HCT116 (cell line): ENCODE measurements at regions of chr22 and their contacts with region 1.

Region 1: GRCh38 chr22:26330966-26331625 is 98.0 kb upstream of the ASPHD2 start:
- DNase-seq: peak; percentile 63
- ATAC-seq: peak; percentile 96
- H3K4me3 ChIP-seq: no peak overlapping the region
- H3K27ac ChIP-seq: no peak overlapping the region
- H3K4me1 ChIP-seq: no peaks in the 10 kb centered on the region
- H3K27me3 ChIP-seq: peaks cover 38% of the 10 kb centered on the region
- CTCF ChIP-seq: peak; percentile 48 to 95 (median 91); a peak in 5 of 6 replicates
- POLR2A ChIP-seq: no peak
- RAD21 ChIP-seq: peak; percentile 80

Region 2: DNA sequence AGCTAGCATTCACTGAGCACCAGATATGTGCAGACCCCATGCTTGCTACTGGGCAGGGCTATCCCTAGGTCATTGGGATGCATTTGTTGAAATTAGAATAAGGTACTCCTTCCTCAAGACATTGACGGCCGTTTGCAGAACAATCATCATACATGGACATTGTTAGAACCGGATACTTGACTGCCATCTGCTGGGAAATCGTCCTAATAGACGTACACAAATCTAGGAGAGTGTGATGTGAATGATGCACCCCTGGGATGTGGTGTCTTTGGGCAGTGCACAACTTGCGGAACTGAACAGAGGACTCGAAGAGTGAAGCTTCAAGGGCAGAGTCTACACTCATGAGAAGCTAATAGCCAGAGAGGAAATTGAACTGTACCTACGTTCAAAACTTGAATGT is 553.2 kb before region 1 on chr22:
- CTCF ChIA-PET with region 1: interaction called, 14 read pairs
- POLR2A ChIA-PET with region 1: no interaction called
- RAD21 ChIA-PET with region 1: interaction called in 1 of 2 experiments, 3 read pairs
- intact Hi-C with region 1: loop called (anchors 1 kb)
- DNase-seq: peak; percentile 44
- ATAC-seq: peak; percentile 88
- H3K4me3 ChIP-seq: no peak overlapping the region
- H3K27ac ChIP-seq: no peak overlapping the region
- H3K4me1 ChIP-seq: no peaks in the 10 kb centered on the region
- H3K27me3 ChIP-seq: no peaks in the 10 kb centered on the region
- CTCF ChIP-seq: peak; percentile 32 to 62 (median 53); a peak in 5 of 6 replicates
- POLR2A ChIP-seq: no peak
- RAD21 ChIP-seq: peak; percentile 47; the same call in 1 of the 2 replicates

Region 3: GRCh38 chr22:25853501-25854284 is 477.4 kb before region 1 on chr22:
- CTCF ChIA-PET with region 1: interaction called, 6 read pairs
- POLR2A ChIA-PET with region 1: no interaction called
- RAD21 ChIA-PET with region 1: no interaction called
- intact Hi-C with region 1: loop called (anchors 5 kb)
- DNase-seq: peak; percentile 6
- ATAC-seq: peak; percentile 59; the same call in 1 of the 2 replicates
- H3K4me3 ChIP-seq: no peak overlapping the region
- H3K27ac ChIP-seq: no peak overlapping the region
- H3K4me1 ChIP-seq: no peaks in the 10 kb centered on the region
- H3K27me3 ChIP-seq: peaks cover 32% of the 10 kb centered on the region
- CTCF ChIP-seq: peak in 2 of 3 experiments; percentile 56 to 65; a peak in 4 of 6 replicates
- POLR2A ChIP-seq: no peak
- RAD21 ChIP-seq: no peak

Region 4: DNA sequence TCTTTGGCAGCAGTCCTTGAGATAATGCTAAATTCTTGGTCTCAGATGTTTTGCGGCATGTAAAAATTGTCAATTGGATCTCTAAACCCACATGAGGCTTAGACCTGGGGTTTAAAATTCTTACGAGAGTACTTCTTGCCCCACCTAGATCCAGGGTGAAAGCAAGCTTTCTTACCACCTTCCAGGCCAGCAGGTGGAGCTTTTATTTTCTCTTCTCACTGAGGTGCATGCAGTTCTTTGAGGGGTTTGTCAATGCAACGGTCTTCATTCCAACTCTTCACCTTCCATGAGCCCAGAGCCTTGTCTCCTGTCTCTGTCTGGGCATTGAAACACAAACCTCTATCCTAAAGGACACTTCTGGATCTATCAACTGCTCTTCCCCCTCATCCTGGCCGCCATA is 435.0 kb before region 1 on chr22:
- CTCF ChIA-PET with region 1: interaction called, 23 read pairs
- POLR2A ChIA-PET with region 1: no interaction called
- RAD21 ChIA-PET with region 1: no interaction called
- intact Hi-C with region 1: loop called (anchors 1 kb)
- DNase-seq: no peak
- ATAC-seq: no peak
- H3K4me3 ChIP-seq: no peak overlapping the region
- H3K27ac ChIP-seq: no peak overlapping the region
- H3K4me1 ChIP-seq: no peaks in the 10 kb centered on the region
- H3K27me3 ChIP-seq: peaks cover 2% of the 10 kb centered on the region; the same call in 1 of the 2 replicates
- CTCF ChIP-seq: peak in 1 of 3 experiments; percentile 27; a peak in 2 of 6 replicates
- POLR2A ChIP-seq: no peak
- RAD21 ChIP-seq: peak; percentile 9; the same call in 1 of the 2 replicates

Region 5: DNA sequence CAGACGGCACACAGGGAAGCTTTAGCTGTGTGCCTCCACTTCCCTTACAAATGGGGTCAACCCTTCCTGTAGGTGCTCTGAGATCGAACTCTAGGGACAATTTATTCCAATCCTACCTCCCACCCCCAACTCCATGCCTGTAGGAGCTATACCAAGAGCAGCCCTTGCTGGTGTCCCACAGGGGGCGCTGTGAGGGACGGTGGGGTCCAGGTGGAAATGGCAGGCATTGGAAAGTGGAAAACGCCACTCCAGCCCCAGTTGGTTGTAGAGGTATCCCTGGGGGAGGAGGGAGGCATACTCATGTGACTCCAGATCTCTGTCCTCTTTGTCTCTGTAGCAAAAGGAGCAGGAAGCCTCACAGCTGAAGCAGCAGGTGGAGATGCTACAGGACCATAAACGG is 427.8 kb before region 1 on chr22:
- CTCF ChIA-PET with region 1: interaction called, 13 read pairs
- POLR2A ChIA-PET with region 1: no interaction called
- RAD21 ChIA-PET with region 1: no interaction called
- intact Hi-C with region 1: no loop called
- DNase-seq: peak; percentile 7
- ATAC-seq: peak; percentile 69; the same call in 1 of the 2 replicates
- H3K4me3 ChIP-seq: no peak overlapping the region
- H3K27ac ChIP-seq: no peak overlapping the region
- H3K4me1 ChIP-seq: no peaks in the 10 kb centered on the region
- H3K27me3 ChIP-seq: peaks cover 28% of the 10 kb centered on the region
- CTCF ChIP-seq: peak in 2 of 3 experiments; percentile 72 to 77; a peak in 4 of 6 replicates
- POLR2A ChIP-seq: no peak
- RAD21 ChIP-seq: no peak

Region 6: GRCh38 chr22:26172389-26172990 is 158.6 kb before region 1 on chr22:
- CTCF ChIA-PET with region 1: interaction called, 11 read pairs
- POLR2A ChIA-PET with region 1: no interaction called
- RAD21 ChIA-PET with region 1: interaction called in 1 of 2 experiments, 7 read pairs
- intact Hi-C with region 1: no loop called
- DNase-seq: peak; percentile 24
- ATAC-seq: peak; percentile 87
- H3K4me3 ChIP-seq: no peak overlapping the region
- H3K27ac ChIP-seq: no peak overlapping the region
- H3K4me1 ChIP-seq: no peaks in the 10 kb centered on the region
- H3K27me3 ChIP-seq: peaks cover 24% of the 10 kb centered on the region; the same call in 1 of the 2 replicates
- CTCF ChIP-seq: peak; percentile 23 to 83 (median 82); a peak in 5 of 6 replicates
- POLR2A ChIP-seq: no peak
- RAD21 ChIP-seq: peak; percentile 20; the same call in 1 of the 2 replicates